Panc1 (cell line): ENCODE measurements at regions of chr2 and their contacts with region 1.

Region 1: GRCh38 chr2:229714736-229715541 is 584 bp upstream of the DNER start:
- DNase-seq: no peak
- ATAC-seq: peak; percentile 89
- H3K4me3 ChIP-seq: peak overlapping the region; percentile 36 to 65
- H3K27ac ChIP-seq: no peak overlapping the region
- H3K4me1 ChIP-seq: peaks cover 4% of the 10 kb centered on the region; the same call in 1 of the 2 replicates
- H3K27me3 ChIP-seq: peaks cover 37% of the 10 kb centered on the region
- CTCF ChIP-seq: no peak

Region 2: DNA sequence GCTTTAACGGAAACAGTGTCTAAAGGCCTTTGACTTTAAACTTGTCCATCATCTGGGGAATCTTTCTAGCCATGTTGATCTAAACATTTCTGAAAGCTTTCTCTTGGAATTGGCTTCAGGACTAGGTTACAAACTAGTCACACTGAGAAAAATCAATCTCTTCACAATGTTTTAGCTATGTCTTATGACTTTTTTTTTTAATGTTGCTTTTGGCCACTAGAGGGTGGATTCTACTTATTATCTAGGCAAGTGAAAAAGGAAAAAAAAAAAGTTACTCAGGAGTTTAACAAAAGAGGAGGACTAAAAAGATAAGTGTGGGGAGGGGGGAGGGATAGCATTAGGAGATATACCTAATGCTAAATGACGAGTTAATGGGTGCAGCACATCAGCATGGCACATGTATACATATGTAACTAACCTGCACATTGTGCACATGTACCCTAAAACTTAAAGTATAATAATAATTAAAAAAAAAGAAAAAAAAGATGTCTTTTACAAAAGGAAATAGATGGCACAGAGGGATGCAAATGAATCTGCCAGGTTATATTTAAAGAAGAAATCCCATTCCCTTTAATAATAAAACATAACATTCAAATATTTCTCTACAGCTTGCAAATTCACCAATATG is 283.5 kb before region 1 on chr2:
- CTCF ChIA-PET with region 1: interaction called, 3 read pairs
- POLR2A ChIA-PET with region 1: no interaction called
- in situ Hi-C with region 1: no loop called
- intact Hi-C with region 1: loop called (anchors 5 kb)
- DNase-seq: no peak
- ATAC-seq: no peak
- H3K4me3 ChIP-seq: no peak overlapping the region
- H3K27ac ChIP-seq: no peak overlapping the region
- H3K4me1 ChIP-seq: no peaks in the 10 kb centered on the region
- H3K27me3 ChIP-seq: no peaks in the 10 kb centered on the region
- CTCF ChIP-seq: peak; percentile 64; the same call in 1 of the 2 replicates

Region 3: DNA sequence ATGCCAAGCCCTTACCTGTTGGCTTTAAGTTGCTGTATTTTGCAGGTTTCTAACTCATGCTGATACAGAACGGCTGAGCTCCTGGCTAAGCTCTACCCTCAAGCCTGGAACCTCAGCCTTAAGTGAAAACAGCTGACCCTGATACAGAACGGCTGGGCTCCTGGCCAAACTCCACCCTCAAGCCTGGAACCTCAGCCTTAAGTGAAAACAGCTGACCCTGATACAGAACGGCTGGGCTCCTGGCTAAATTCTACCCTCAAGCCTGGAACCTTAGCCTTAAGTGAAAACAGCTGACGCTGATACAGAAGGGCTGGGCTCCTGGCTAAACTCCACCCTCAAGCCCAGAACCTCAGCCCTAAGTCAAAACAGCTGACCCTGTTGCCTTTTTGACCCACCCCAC is 17.0 kb after region 1 on chr2:
- CTCF ChIA-PET with region 1: no interaction called
- POLR2A ChIA-PET with region 1: no interaction called
- in situ Hi-C with region 1: no loop called
- intact Hi-C with region 1: no loop called
- DNase-seq: no peak
- ATAC-seq: no peak
- H3K4me3 ChIP-seq: no peak overlapping the region
- H3K27ac ChIP-seq: no peak overlapping the region
- H3K4me1 ChIP-seq: no peaks in the 10 kb centered on the region
- H3K27me3 ChIP-seq: no peaks in the 10 kb centered on the region
- CTCF ChIP-seq: no peak

Region 4: DNA sequence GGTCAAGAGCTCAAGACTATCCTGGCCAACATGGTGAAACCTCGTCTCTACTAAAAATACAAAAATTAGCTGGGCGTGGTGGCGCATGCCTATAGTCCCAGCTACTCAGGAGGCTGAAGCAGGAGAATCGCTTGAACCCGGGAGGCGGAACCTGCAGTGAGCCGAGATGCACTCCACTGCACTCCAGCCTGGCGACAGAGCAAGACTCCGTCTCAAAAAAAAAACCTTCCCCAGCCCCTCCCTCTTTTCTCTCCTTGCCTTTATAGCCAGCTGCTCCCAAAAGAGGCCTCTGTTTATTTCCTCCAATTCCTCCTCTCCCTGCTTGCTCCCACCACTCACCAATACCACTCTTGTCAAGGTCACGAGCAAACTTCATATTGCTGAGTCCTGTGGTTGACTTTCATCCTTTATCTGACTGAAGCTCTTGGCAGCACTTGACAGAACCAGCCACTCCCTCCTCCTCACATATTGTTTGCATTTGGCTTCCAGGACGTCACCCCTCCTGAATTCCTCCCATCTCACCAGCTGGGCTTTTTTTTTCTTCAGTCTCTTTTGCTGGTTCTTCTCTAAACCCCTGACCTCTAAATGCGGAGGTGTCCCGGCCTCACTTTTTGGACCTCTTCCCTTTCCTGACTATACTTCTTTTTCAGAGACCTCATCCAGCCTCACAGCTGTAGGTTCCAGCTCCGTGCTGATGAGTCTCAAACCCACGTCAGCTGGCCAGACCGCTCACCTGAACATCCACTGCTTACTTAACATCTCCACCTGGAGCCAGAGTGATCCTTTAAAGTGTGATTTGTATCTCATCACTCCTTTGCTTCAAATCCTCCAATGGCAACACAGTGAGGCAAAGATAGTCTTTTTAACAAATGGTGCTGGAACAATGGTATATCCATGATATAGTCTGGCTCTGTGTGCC is 913.1 kb after region 1 on chr2:
- CTCF ChIA-PET with region 1: no interaction called
- POLR2A ChIA-PET with region 1: no interaction called
- in situ Hi-C with region 1: no loop called
- intact Hi-C with region 1: no loop called
- DNase-seq: no peak
- ATAC-seq: no peak
- H3K4me3 ChIP-seq: no peak overlapping the region
- H3K27ac ChIP-seq: no peak overlapping the region
- H3K4me1 ChIP-seq: no peaks in the 10 kb centered on the region
- H3K27me3 ChIP-seq: no peaks in the 10 kb centered on the region
- CTCF ChIP-seq: no peak